ENCODE measurements at regions of chr6 and their contacts with region 1.

Region 1: DNA sequence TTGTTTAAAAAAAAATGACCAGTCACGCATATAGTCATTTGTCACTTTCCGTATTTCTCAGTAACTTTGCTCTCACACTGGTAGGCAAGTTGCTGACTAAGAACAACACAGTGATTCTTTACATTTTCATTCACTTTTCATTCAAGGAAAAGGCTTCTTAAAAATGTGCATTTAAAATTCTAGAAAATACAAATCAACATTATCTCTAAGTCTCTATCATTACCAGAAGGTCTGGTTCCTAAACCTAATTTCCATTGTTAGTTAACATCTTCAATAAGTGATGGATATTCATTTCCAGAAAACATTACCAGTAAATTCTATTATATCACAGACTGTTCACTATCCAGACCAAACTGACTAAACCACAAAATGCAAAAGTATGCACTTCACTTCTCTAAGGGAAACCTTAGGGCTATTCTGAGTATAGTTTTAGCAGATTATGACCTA is 115.3 kb downstream of the AHI1 start:
- DNase-seq: no peak
- H3K4me3 Mint-ChIP-seq: no peak overlapping the region
- H3K27ac Mint-ChIP-seq: no peak overlapping the region
- H3K4me1 Mint-ChIP-seq: peaks cover 14% of the 10 kb centered on the region
- H3K27me3 Mint-ChIP-seq: no peaks in the 10 kb centered on the region

Region 2: GRCh38 chr6:135299256-135299655 is 82.9 kb before region 1 on chr6:
- intact Hi-C with region 1: loop called (anchors 5 kb)
- DNase-seq: no peak
- H3K4me3 Mint-ChIP-seq: no peak overlapping the region
- H3K27ac Mint-ChIP-seq: peak overlapping the region; percentile 88
- H3K4me1 Mint-ChIP-seq: peaks cover 37% of the 10 kb centered on the region
- H3K27me3 Mint-ChIP-seq: no peaks in the 10 kb centered on the region

Region 3: DNA sequence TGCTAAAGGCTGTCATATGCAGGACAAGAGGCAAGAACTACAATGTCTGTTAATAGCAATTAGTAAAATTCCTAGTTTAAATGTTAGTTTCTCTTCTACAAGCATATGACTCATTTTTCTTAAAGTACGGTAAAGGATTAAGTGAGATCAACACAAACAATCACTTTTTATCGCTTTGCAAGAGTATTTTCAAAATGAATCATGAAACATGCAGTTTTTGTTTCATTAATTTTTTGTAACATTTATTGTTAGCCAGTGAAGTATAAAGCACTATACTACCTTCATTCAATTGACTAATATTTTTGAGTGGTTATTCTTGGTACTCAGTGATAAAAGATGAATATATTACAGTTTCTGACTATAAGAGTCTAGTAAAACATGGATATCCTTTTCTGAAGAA is 23.2 kb before region 1 on chr6:
- intact Hi-C with region 1: loop called (anchors 1 kb)
- DNase-seq: no peak
- H3K4me3 Mint-ChIP-seq: no peak overlapping the region
- H3K27ac Mint-ChIP-seq: peak overlapping the region; percentile 69
- H3K4me1 Mint-ChIP-seq: peaks cover 21% of the 10 kb centered on the region
- H3K27me3 Mint-ChIP-seq: no peaks in the 10 kb centered on the region

Measured in activated T-helper 2 cell treated with anti-CD3 and anti-CD28 coated beads, Interferon-gamma antibody, Interleukin-2, Interleukin-4, amounts not matched to agents 10 μg/mL and 5 μg/mL and 100 μg/mL, durations not matched to agents 14 hours and 24 hours and 36 hours (primary cell).